ENCODE measurements at regions of chrX and their contacts with region 1.

Region 1: DNA sequence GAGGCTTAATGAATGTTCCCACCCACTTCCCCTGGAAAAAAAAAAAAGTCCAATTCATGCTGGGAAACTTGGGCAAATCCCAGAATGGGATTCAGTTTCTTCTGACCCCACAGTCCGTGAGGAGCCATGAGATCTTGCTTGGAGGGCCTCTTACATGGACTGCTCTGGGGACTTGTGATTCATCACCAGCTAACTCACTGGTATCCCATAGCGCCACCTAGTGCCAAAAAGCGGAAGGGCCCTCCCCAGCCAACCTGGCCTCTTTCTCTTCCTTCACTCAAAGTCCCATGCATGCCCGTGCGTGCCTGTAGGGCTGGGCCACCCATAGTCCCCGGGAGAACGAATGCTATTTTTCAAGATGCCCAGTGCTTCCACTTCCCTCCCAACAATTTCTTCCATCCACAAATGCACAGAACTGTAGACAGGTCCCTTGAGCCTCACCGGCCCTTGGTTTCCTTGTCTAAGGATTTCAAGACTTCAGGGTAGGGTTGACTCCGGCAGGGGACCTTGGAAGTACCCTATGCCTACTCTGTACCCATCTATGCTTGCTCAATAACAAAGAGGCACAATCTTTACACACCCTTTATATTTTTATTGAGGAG is 5.1 kb downstream of the RTL5 start:
- DNase-seq: peak; percentile 56 to 94
- H3K4me3 ChIP-seq: no peak overlapping the region
- H3K27ac ChIP-seq: peak overlapping the region; percentile 77 to 81
- H3K4me1 ChIP-seq: peaks cover 4 to 17% of the 10 kb centered on the region in 2 donors
- H3K27me3 ChIP-seq: no peaks in the 10 kb centered on the region
- CTCF ChIP-seq: peak; percentile 69 to 81 (median 77)

Region 2: DNA sequence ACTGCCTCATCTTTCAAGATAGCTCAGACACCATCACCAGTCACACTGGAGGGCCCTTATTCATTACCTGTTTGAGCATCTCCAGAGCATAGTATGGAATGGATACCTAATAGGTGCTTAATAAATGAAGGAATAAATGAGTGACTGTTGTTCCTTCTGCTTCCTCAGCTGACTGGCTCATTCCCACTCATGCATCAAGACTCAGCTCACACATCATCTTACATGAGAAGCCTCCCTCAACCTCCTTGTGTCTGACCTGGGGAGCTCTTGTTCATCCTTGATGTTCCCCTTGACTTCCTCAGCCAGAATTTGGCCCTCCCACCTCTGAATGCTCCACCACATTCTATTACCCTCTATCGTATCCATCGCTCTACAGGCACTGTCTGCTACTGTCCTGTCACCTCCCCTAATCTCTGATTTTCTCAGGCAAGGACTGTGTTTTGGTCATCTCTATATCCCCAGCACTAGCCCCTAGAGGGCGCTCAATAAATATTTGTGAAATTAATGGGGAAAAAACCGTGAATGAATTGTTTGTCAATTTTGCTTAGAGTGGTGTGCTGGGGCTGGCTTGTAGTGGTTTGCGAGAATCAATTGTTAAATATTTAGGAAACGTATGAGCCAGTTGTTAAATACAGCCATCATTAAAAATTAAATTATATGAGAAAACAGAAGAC is 127.7 kb before region 1 on chrX:
- intact Hi-C with region 1: loop called (anchors 1 kb)
- DNase-seq: no peak
- H3K4me3 ChIP-seq: no peak overlapping the region
- H3K27ac ChIP-seq: no peak overlapping the region
- H3K4me1 ChIP-seq: no peaks in the 10 kb centered on the region
- H3K27me3 ChIP-seq: no peaks in the 10 kb centered on the region
- CTCF ChIP-seq: peak; percentile 44 to 66 (median 47)

Region 3: GRCh38 chrX:72230290-72230689 is 103.7 kb after region 1 on chrX:
- intact Hi-C with region 1: no loop called
- DNase-seq: no peak
- H3K4me3 ChIP-seq: no peak overlapping the region
- H3K27ac ChIP-seq: no peak overlapping the region
- H3K4me1 ChIP-seq: no peaks in the 10 kb centered on the region
- H3K27me3 ChIP-seq: no peaks in the 10 kb centered on the region
- CTCF ChIP-seq: no peak

Region 4: DNA sequence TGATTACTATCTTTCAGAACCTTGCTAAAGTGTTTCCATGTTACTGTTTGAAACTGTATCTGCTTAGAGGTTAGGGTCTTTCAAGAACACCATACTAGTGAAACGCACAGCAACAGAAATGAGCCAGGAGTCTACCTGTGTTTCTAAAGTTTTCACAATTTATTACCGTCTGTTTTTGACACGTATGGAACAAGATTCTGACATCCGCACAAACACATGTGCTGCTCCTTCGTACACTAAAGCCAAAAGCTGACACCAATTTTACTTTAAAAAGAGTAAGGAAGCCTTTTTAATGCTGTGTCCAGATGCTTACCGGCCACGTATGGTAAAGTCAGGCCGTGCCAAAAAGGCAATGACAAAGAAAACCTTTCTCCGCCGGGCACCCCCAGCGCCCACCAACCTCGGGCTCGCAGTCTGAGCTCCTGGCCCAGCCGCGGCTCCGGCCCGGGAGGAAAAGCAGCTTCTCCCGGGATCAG is 149.9 kb after region 1 on chrX:
- intact Hi-C with region 1: loop called (anchors 5 kb)
- DNase-seq: no peak
- H3K4me3 ChIP-seq: peak overlapping the region; percentile 63 to 75
- H3K27ac ChIP-seq: peak overlapping the region; percentile 87 to 88
- H3K4me1 ChIP-seq: peaks cover 0 to 3% of the 10 kb centered on the region in 2 donors
- H3K27me3 ChIP-seq: no peaks in the 10 kb centered on the region
- CTCF ChIP-seq: no peak

Region 5: DNA sequence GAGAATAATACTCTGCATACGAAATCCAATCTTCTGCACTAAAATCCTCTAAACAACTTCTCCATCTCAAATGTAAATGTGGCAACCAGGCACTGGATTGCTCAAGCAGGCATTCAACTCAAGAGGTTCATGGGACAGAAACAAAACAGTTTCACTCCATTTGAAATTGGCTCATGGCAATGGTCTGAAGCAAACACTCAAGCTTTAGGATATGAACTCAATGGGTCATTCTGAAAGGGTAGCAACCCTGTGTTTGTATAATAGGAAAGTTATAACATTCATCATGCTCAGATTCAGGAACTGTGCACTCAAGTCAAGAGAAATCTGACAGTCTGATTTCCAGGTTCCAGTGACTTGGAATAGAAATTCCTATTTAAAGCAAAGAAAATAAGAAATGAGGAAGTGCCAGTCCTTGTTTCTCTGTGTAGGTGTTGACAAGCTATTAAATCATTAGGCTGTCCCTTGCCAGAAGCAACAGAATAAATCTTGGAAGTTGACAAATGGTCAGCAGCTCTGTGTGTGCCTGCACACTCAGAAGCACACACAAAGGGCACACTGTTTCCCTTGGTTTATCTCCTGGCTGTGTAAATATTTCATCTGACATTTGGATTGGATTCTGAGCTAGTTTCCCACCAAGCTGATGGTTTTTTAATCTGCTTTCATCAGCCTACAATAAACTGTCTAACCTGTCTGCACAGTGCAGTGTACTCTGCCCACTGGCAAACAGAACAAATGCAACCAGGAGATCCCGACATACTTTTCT is 255.0 kb after region 1 on chrX:
- intact Hi-C with region 1: no loop called
- DNase-seq: no peak
- H3K4me3 ChIP-seq: no peak overlapping the region
- H3K27ac ChIP-seq: no peak overlapping the region
- H3K4me1 ChIP-seq: no peaks in the 10 kb centered on the region
- H3K27me3 ChIP-seq: no peaks in the 10 kb centered on the region
- CTCF ChIP-seq: no peak